ENCODE measurements at regions of chr10 and their contacts with region 1.

Region 1: DNA sequence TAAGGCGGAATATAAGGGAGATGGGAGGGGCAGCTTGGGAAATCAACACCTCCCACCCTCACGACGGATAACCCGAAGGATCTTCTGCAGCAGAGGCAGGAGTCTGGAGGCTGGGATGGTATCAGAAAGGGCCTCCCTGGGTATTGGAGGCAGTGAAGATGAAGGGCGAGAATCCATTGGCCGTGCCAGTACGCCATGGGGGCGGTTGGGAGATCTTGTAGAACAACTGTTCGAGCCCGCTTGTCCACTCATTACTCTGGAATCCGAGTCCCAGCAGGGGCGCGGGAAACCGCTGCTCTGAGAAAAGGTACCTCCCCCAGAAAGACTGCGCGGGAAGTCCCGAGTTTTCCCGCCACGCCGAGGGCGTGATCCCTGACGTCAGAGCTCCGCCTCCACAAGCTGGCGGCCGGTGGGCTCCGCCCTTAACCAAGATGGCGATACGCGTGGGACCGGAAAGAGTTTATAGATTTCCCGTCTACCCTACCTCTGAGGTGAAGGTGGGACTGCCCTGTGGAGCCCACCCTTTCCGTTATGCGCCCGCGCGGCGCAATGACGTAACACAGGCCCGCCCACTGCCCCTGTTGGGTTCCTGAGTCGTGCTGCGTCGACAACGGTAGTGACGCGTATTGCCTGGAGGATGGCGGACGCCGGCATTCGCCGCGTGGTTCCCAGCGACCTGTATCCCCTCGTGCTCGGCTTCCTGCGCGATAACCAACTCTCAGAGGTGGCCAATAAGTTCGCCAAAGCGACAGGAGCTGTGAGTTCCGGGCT is at the start of gene NOLC1:
- DNase-seq: peak; percentile 100
- H3K4me3 Mint-ChIP-seq: peak within 1 kb of the TSS; percentile 96
- H3K27ac Mint-ChIP-seq: peak within 1 kb of the TSS; percentile 98
- H3K4me1 Mint-ChIP-seq: peaks cover 53% of the 10 kb centered on the region
- H3K27me3 Mint-ChIP-seq: no peaks in the 10 kb centered on the region
- total RNA-seq, gene NOLC1: 165 to 168 TPM

Region 2: DNA sequence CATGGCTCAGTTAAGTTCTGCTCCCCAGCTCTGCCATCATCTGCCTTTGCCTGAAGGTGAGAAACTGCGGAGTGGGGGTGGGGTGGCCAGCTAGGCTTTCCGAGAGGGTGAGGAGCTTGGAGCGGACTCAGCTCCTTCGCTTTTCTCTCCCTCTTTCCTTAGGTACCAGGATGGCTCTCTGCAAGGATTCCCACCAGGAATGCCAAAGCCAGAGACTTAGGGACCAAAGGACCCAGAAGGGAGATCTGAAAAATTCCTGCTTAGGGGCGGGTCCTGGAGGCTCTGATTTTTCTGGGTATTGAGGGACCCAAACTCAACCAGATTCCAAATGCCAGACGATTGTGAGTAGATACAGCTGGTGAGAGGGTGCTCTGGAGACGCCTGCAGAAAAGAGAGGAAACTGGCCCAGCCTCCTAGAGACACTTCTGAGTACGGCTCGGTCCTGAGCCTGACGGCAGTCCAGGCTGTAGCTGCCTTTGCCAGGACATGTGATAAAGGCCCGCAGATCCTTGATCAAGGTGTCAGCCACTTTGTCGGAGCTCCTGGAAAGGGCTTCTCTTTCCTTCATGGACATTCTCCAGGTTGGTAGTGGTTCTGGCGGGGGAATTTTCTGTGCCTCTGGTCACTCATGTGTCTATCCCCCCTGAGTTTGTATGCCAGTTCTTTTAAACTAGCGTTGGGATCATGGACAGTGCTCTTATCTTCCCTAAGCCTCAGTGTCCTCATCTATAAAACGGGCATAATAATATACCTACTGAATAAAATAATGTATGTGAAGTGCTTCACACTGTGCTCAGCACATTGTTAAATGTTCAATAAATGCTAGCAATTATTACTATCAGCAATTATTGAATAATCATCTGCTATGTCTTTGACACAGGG is 840.5 kb before region 1 on chr10:
- CTCF ChIA-PET with region 1: no interaction called
- POLR2A ChIA-PET with region 1: no interaction called
- intact Hi-C with region 1: no loop called
- DNase-seq: peak; percentile 27
- H3K4me3 Mint-ChIP-seq: peak overlapping the region; percentile 28
- H3K27ac Mint-ChIP-seq: no peak overlapping the region
- H3K4me1 Mint-ChIP-seq: peaks cover 6% of the 10 kb centered on the region
- H3K27me3 Mint-ChIP-seq: peaks cover 46% of the 10 kb centered on the region

Region 3: DNA sequence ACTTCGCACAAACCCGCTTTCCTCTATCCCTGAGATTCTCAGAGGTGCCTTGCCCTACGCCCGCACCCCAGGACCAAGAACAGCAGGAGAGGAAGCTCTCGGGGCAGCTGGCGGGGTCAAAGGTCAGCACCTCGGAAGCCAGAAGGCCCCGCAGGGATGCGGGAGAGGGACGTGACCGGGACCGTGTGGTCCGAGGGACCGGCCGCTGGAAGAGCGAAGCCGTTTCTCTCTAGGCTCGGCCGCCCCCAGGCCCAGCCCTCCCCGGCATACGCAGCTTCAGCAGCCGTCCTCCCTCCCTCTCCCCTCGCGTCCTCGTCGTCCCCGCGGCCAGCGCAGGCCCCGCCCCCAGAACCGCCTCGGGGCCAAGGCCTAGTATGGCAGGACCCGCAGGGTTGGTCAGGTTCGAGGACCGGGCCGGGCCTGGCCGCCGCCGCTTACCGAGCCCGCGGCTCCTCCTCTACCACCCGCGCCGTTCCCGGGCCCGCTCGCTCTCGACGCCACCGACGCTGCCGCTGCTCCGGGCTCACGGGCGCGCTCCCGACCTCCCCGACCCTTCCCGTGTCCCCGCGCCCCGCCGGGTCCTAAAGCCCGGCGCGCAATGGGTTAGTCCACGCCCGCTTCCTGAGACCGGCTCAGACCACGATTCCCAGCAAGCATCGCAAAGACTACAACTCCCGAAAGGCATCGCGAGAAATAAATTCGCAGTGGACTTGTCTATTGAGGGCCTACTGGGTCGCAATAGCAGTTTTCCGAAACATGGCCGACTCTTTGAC is 96.1 kb before region 1 on chr10 and contains the start of gene ARMH3:
- CTCF ChIA-PET with region 1: no interaction called
- POLR2A ChIA-PET with region 1: no interaction called
- intact Hi-C with region 1: loop called (anchors 2 kb)
- DNase-seq: peak; percentile 95
- H3K4me3 Mint-ChIP-seq: peak within 1 kb of the TSS; percentile 93
- H3K27ac Mint-ChIP-seq: peak within 1 kb of the TSS; percentile 87
- H3K4me1 Mint-ChIP-seq: peaks cover 41% of the 10 kb centered on the region
- H3K27me3 Mint-ChIP-seq: no peaks in the 10 kb centered on the region
- total RNA-seq, gene ARMH3: 16.1 to 18.8 TPM

Region 4: DNA sequence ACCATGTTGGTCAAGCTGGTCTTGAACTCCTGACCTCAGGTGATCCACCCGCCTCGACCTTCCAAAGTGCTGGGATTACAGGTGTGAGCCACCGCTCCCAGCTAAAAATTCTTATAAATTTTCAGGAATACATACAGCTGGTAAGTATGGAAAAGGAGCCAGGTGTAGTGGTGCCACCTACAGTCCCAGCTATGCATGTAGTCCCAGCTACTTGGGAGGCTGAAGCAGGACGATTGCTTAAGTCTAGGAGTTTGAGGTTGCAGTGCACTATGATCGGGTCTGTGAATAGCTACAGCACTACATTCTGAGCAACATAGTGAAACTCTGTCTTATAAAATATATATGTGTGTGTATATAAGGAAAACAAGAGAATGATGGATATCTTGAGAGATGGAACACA is 50.8 kb before region 1 on chr10:
- CTCF ChIA-PET with region 1: no interaction called
- POLR2A ChIA-PET with region 1: no interaction called
- intact Hi-C with region 1: no loop called
- DNase-seq: no peak
- H3K4me3 Mint-ChIP-seq: no peak overlapping the region
- H3K27ac Mint-ChIP-seq: no peak overlapping the region
- H3K4me1 Mint-ChIP-seq: peaks cover 9% of the 10 kb centered on the region
- H3K27me3 Mint-ChIP-seq: no peaks in the 10 kb centered on the region

Region 5: GRCh38 chr10:102114861-102115618 is 36.9 kb before region 1 on chr10:
- CTCF ChIA-PET with region 1: interaction called, 4 read pairs
- POLR2A ChIA-PET with region 1: interaction called, 5 read pairs
- intact Hi-C with region 1: loop called (anchors 1 kb)
- DNase-seq: peak; percentile 93
- H3K4me3 Mint-ChIP-seq: peak overlapping the region; percentile 88
- H3K27ac Mint-ChIP-seq: peak overlapping the region; percentile 96
- H3K4me1 Mint-ChIP-seq: peaks cover 58% of the 10 kb centered on the region
- H3K27me3 Mint-ChIP-seq: no peaks in the 10 kb centered on the region

Region 6: DNA sequence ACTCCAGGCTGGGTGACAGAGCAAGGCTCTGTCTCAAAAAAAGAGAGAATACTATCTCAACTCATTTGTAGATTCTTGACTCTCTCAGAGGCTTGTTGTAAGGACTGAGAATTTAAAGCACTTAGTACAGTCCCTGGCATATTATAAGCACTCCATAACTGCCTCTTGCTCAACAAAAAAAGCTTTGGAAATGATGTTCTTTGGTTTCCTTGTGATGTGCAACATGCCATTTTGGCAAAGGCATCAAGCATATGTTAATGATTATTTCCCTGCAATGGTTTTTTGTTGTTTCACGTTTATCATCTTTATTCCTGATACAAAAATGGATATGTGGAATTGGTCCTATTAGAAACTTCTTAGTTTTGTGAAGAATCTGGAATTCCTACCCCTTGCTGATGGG is 15.9 kb after region 1 on chr10:
- CTCF ChIA-PET with region 1: interaction called, 12 read pairs
- POLR2A ChIA-PET with region 1: interaction called, 7 read pairs
- intact Hi-C with region 1: no loop called
- DNase-seq: no peak
- H3K4me3 Mint-ChIP-seq: no peak overlapping the region
- H3K27ac Mint-ChIP-seq: no peak overlapping the region
- H3K4me1 Mint-ChIP-seq: peaks cover 5% of the 10 kb centered on the region
- H3K27me3 Mint-ChIP-seq: no peaks in the 10 kb centered on the region

Region 7: GRCh38 chr10:102231357-102232318 is 79.7 kb after region 1 on chr10:
- CTCF ChIA-PET with region 1: interaction called, 10 read pairs
- POLR2A ChIA-PET with region 1: interaction called, 3 read pairs
- intact Hi-C with region 1: no loop called
- DNase-seq: peak; percentile 85
- H3K4me3 Mint-ChIP-seq: peak overlapping the region; percentile 72
- H3K27ac Mint-ChIP-seq: no peak overlapping the region
- H3K4me1 Mint-ChIP-seq: peaks cover 5% of the 10 kb centered on the region
- H3K27me3 Mint-ChIP-seq: peaks cover 32% of the 10 kb centered on the region

Region 8: GRCh38 chr10:102450194-102450938 is 298.4 kb after region 1 on chr10:
- CTCF ChIA-PET with region 1: no interaction called
- POLR2A ChIA-PET with region 1: interaction called, 3 read pairs
- intact Hi-C with region 1: loop called (anchors 2 kb)
- DNase-seq: peak; percentile 90
- H3K4me3 Mint-ChIP-seq: peak overlapping the region; percentile 94
- H3K27ac Mint-ChIP-seq: peak overlapping the region; percentile 94
- H3K4me1 Mint-ChIP-seq: peaks cover 35% of the 10 kb centered on the region
- H3K27me3 Mint-ChIP-seq: no peaks in the 10 kb centered on the region

Region 9: DNA sequence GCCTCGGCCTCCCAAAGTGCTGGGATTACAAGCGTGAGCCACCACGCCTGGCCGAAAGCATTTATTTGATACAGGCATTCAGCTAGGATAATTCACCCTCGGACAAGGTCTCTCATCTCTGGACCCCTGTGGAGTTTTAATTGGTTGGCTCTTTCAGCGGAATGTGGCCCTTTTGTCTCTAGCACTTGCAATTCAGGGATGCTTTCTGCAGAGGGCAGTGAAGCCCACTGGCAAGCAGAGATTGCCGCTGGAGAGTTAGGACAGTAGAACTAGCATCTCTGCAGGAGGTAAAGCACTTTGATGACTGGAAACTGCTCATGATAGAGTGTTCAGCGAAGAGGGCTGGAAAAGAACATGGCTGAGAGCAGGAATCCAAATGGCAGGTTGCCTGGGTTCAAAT is 413.8 kb after region 1 on chr10:
- CTCF ChIA-PET with region 1: no interaction called
- POLR2A ChIA-PET with region 1: no interaction called
- intact Hi-C with region 1: no loop called
- DNase-seq: no peak
- H3K4me3 Mint-ChIP-seq: no peak overlapping the region
- H3K27ac Mint-ChIP-seq: no peak overlapping the region
- H3K4me1 Mint-ChIP-seq: peaks cover 7% of the 10 kb centered on the region
- H3K27me3 Mint-ChIP-seq: no peaks in the 10 kb centered on the region

Measured in activated CD4-positive, alpha-beta memory T cell treated with anti-CD3 and anti-CD28 coated beads for 36 hours (primary cell).